ENCODE measurements at regions of chr4 and their contacts with region 1.

Region 1: GRCh38 chr4:185395956-185396723 is 416 bp upstream of the LRP2BP start:
- DNase-seq: peak; percentile 98
- H3K4me3 ChIP-seq: peak overlapping the region; percentile 57 to 80 (median 68)
- H3K27ac ChIP-seq: peak overlapping the region; percentile 97 to 100 (median 99)
- H3K4me1 ChIP-seq: peaks cover 2 to 43% (median 17%) of the 10 kb centered on the region in 4 donors
- H3K27me3 ChIP-seq: no peaks in the 10 kb centered on the region
- CTCF ChIP-seq: no peak
- EP300 ChIP-seq: no peak
- POLR2A ChIP-seq: peak; percentile 71

Region 2: GRCh38 chr4:185203486-185204237 is 192.5 kb before region 1 on chr4 and contains the start of gene CFAP97:
- in situ Hi-C with region 1: loop called in 1 of 4 experiments (anchors 10 kb)
- intact Hi-C with region 1: loop called (anchors 5 kb)
- DNase-seq: peak; percentile 92
- H3K4me3 ChIP-seq: peak within 1 kb of the TSS; percentile 65 to 80 (median 75)
- H3K27ac ChIP-seq: peak within 1 kb of the TSS; percentile 93 to 97 (median 96)
- H3K4me1 ChIP-seq: peaks cover 13 to 24% (median 22%) of the 10 kb centered on the region in 4 donors
- H3K27me3 ChIP-seq: no peaks in the 10 kb centered on the region
- CTCF ChIP-seq: no peak
- EP300 ChIP-seq: no peak
- POLR2A ChIP-seq: no peak
- total RNA-seq, gene CFAP97: 4.6 to 17.1 (median 9.3) TPM

Region 3: DNA sequence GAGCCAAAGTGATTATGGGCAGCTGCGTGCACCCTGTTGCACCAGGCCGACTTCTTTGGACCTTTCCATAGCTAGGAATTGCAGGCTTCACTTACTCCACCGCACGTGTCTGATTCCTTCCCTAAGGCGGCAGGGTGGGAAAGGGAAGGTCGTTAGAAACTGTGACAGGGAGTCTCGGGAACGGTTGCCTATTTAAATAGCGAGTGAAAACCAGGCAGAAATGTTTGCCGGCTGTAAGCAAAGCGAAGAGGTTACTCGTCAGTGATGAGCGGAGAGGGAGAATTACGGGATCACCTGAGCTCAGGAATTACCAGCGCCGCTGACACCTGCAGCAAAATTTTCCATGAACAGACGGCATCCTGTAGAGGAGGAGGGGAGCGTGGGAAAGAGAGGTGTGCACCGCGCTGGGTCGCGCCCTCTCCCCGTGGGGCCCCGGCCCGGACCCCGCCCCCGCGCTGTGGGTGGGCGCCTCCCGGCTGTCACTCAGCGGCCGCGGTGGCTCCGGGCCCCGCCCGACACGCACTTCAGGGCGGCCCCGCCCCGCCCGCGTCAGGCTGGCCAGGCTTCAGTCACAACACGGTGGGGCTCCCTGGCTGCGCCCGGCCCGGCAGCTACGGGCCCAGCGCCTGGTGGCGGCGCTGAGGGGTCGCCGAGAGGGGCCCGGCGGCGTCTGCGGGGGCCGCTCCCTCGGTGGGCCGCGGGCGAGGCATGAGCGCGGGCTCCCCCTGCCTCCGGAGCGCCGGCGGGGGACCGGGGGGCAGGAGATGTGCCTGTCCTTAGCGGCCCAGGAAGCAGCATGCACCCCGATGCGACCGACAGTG is 186.9 kb before region 1 on chr4 and contains the start of gene SNX25:
- in situ Hi-C with region 1: loop called in 2 of 4 experiments (anchors 10 kb)
- intact Hi-C with region 1: loop called (anchors 5 kb)
- DNase-seq: peak; percentile 90
- H3K4me3 ChIP-seq: peak within 1 kb of the TSS; percentile 63 to 89 (median 76)
- H3K27ac ChIP-seq: peak within 1 kb of the TSS; percentile 88 to 95 (median 94)
- H3K4me1 ChIP-seq: peaks cover 8 to 32% (median 28%) of the 10 kb centered on the region in 4 donors
- H3K27me3 ChIP-seq: no peaks in the 10 kb centered on the region
- CTCF ChIP-seq: no peak
- EP300 ChIP-seq: no peak
- POLR2A ChIP-seq: peak; percentile 33
- total RNA-seq, gene SNX25: 17.1 to 68.5 (median 19.5) TPM